ENCODE measurements at regions of chr1 and their contacts with region 1.

Region 1: DNA sequence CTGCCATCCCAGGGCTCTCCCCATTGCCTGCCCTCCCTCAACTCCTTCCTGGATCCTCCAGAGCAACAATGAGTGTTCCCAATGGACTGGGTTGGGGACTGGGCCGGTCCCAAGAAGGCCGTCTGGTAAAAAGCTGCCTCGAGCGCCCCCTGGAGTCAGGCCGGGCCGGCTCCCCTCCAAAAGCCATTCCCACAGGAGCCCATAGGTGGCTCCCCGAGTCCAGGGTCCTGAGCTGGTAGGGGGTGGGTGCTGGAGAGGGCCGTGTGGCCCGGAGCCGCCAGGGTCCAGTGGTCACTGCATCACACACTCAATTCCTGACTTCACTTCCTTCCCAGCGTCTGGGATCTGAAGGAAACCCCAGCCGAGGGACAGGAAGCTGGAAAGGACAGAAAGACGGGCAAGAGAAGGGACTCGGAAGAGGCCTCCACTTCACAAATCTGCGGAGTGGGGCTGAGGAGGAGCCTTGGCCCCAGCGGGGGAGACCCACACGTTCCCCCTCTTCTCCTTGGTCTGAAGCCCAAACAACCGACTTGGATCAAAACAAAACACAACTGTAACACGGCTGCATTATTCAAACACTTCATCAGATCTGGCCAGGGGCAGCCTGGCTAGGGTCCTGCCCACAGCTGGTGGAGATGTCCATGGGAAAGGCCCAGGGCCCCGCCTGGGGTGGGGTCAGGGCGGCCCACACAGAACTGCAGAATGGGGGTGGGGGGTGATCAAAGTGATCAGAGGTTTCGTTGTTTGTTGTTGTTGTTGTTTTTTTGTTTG is 10.9 kb upstream of the ALDH4A1 start:
- DNase-seq: peak; percentile 62 to 84
- ATAC-seq: peak; percentile 87

Region 2: GRCh38 chr1:18962121-18962721 is 49.0 kb after region 1 on chr1:
- intact Hi-C with region 1: loop called in 1 of 2 experiments (anchors 5 kb)
- DNase-seq: peak; percentile 42 to 58
- ATAC-seq: peak; percentile 77

Region 3: GRCh38 chr1:19081218-19081893 is 168.1 kb after region 1 on chr1:
- intact Hi-C with region 1: loop called in 1 of 2 experiments (anchors 10 kb)
- DNase-seq: peak in 1 of 2 donors; percentile 66
- ATAC-seq: peak; percentile 81

Measured in left colon (tissue), 2 donors.